ENCODE measurements at regions of chr17 and their contacts with region 1.

Region 1: GRCh38 chr17:67376737-67377487 is at the start of gene PITPNC1:
- DNase-seq: peak; percentile 90
- ATAC-seq: peak; percentile 78
- H3K4me3 Mint-ChIP-seq: peak within 1 kb of the TSS; percentile 93
- H3K27ac Mint-ChIP-seq: peak within 1 kb of the TSS; percentile 90
- H3K4me1 Mint-ChIP-seq: peaks cover 39% of the 10 kb centered on the region
- H3K27me3 Mint-ChIP-seq: no peaks in the 10 kb centered on the region
- total RNA-seq, gene PITPNC1: 100 to 104 TPM

Region 2: GRCh38 chr17:67366193-67367157 is 10.4 kb before region 1 on chr17 and contains the start of gene PSMD12:
- POLR2A ChIA-PET with region 1: interaction called, 14 read pairs
- DNase-seq: peak; percentile 98
- ATAC-seq: peak; percentile 93
- H3K4me3 Mint-ChIP-seq: peak within 1 kb of the TSS; percentile 94
- H3K27ac Mint-ChIP-seq: peak within 1 kb of the TSS; percentile 93
- H3K4me1 Mint-ChIP-seq: peaks cover 34% of the 10 kb centered on the region
- H3K27me3 Mint-ChIP-seq: no peaks in the 10 kb centered on the region
- total RNA-seq, gene PSMD12: 39.8 to 40.5 TPM

Region 3: GRCh38 chr17:67390646-67391384 is 13.9 kb after region 1 on chr17:
- POLR2A ChIA-PET with region 1: interaction called, 19 read pairs
- DNase-seq: peak; percentile 68
- ATAC-seq: peak; percentile 92
- H3K4me3 Mint-ChIP-seq: peak overlapping the region; percentile 88
- H3K27ac Mint-ChIP-seq: peak overlapping the region; percentile 92
- H3K4me1 Mint-ChIP-seq: peaks cover 55% of the 10 kb centered on the region
- H3K27me3 Mint-ChIP-seq: no peaks in the 10 kb centered on the region

Region 4: DNA sequence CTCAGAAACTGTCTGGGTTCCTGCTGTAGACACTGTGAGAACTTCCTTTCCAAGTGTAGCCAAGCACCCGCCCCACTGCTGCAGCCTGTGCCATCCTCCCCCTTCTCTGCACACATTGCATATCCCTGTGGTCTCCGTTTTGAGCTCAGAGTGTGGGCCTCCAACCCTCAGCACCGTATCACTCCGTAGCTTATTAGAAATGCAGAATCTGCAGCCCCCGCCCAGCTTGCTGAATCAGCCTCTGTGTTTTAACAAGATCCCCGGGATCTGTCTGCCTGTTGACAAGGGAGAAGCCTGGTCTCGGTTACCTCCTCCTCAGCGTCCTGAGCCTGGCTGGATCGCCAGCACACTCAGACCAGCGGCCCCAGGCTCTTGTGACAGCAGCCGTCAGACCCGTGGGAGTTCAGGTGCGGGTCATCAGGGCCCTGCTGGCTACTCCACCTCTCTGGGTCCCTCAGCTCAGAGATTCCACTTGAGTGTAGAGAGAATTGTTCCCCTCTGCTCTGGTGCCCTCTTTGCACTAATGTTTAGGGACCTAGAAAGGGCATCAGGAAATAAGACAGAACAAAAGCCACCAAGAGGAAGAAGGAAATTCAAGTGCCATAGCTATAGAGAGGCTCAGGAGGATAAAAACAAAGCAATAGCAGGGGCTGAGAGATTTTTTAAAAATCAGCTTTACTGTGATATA is 92.4 kb after region 1 on chr17:
- POLR2A ChIA-PET with region 1: interaction called, 120 read pairs
- DNase-seq: peak; percentile 55
- ATAC-seq: peak; percentile 90
- H3K4me3 Mint-ChIP-seq: peak overlapping the region; percentile 68
- H3K27ac Mint-ChIP-seq: peak overlapping the region; percentile 88
- H3K4me1 Mint-ChIP-seq: peaks cover 59% of the 10 kb centered on the region
- H3K27me3 Mint-ChIP-seq: no peaks in the 10 kb centered on the region